Heart right ventricle (tissue), 16 donors: ENCODE measurements at regions of chr14 and their contacts with region 1.

Region 1: DNA sequence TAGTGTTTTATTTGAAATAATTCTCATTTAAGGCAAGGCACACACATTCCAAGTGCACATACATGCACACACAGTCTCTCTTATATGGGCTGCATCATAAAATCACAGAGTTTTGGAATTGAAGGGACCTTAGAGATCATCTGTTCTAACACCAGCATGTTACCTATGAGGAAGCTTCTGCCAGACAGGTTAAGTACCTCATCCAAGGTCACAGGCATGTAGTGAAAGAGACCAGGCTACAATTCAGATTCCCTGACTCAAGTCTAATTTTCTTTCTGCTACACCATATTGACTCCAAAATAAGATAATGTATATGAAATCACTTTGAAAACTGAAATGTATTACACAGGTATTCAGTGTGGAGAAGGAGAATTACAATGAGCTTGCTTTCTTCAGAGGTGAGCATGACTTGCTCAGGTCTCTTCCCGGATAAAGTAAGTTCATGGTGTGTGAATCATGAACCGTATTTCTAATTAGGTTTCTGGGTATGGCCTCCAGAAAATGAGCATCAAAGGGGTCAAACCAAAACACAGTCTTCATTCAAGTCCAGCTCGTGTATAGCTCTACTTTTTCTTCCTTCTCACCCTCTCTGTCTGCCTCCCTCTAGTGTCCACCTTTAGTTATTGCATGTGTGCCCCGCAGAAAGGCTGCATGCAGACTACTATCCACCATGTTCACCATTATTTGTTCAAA is 411.9 kb downstream of the FUT8 start:
- DNase-seq: peak in 1 of 2 donors; percentile 48
- ATAC-seq: peak in 7 of 8 donors; percentile 55 to 84 (median 71)
- H3K4me3 ChIP-seq: no peak overlapping the region
- H3K27ac ChIP-seq: no peak overlapping the region
- H3K4me1 ChIP-seq: no peaks in the 10 kb centered on the region
- H3K27me3 ChIP-seq: peaks cover 0 to 51% (median 41%) of the 10 kb centered on the region in 7 donors
- CTCF ChIP-seq: peak; percentile 81 to 95 (median 91)

Region 2: DNA sequence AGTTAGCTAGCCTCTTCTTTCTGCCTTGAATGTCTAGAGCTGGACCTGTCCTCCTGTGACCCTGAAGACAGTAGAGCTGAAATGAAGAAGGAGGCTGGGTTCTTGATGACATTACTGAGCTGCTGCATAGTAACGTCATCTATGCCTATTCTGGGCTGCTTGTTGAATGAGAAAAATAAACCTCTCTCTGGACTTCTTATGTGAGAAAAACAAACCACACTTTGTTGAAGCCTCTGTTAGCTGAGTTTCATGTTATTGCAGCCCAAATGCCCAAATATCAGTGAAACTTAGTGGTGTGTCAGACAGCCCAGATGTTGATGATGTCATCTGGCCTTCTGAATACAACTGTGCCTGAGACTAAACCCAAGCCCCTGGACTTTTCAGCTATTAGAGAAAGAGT is 655.1 kb before region 1 on chr14:
- intact Hi-C with region 1: loop called in 8 of 10 experiments (anchors 2 to 10 kb)
- DNase-seq: peak in 1 of 2 donors; percentile 10
- ATAC-seq: peak in 7 of 8 donors; percentile 54 to 85 (median 71)
- H3K4me3 ChIP-seq: no peak overlapping the region
- H3K27ac ChIP-seq: peak overlapping the region in 6 of 10 donors; percentile 17 to 58 (median 47)
- H3K4me1 ChIP-seq: peaks cover 0 to 25% (median 7%) of the 10 kb centered on the region in 9 donors
- H3K27me3 ChIP-seq: peaks cover 0 to 24% (median 12%) of the 10 kb centered on the region in 7 donors
- CTCF ChIP-seq: no peak

Region 3: DNA sequence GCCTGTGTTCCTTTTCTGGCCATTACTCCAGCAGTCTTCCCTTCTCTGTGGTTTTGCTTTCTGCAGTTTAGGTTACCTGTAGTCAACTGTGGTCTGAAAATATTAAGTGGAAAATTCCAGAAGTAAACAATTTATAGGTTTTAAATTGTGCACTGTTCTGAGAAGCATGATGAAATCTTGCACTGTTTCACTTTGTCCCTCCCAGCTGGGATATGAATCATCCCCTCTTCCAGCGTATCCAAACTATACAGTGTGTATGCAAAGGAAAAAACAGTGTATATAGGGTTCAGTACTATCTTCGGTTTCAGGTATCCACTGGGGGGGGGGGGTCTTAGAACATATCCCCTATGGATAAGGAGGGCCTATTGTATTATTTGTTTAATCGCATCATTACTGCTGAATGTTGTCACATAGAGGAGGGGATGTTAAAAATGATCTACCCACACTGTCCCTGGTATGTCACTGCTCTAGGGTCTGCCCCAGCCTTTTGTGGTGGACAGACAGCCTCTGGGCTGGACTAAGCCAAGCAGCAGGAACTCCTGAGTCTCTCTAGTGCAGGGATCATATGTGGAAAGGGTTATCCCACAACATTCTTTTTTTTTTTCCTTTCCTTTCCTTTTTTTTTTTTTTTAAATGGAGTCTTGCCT is 613.0 kb before region 1 on chr14:
- intact Hi-C with region 1: loop called in 1 of 10 experiments (anchors 10 kb)
- DNase-seq: no peak
- ATAC-seq: no peak
- H3K4me3 ChIP-seq: no peak overlapping the region
- H3K27ac ChIP-seq: peak overlapping the region in 1 of 10 donors; percentile 59
- H3K4me1 ChIP-seq: peaks cover 0 to 64% (median 0%) of the 10 kb centered on the region in 9 donors
- H3K27me3 ChIP-seq: no peaks in the 10 kb centered on the region
- CTCF ChIP-seq: no peak

Region 4: GRCh38 chr14:65222440-65222858 is 602.0 kb before region 1 on chr14:
- intact Hi-C with region 1: loop called in 3 of 10 experiments (anchors 2 to 10 kb)
- DNase-seq: peak; percentile 23 to 55
- ATAC-seq: peak in 7 of 8 donors; percentile 29 to 81 (median 79)
- H3K4me3 ChIP-seq: no peak overlapping the region
- H3K27ac ChIP-seq: peak overlapping the region in 1 of 10 donors; percentile 35
- H3K4me1 ChIP-seq: peaks cover 0 to 31% (median 13%) of the 10 kb centered on the region in 9 donors
- H3K27me3 ChIP-seq: no peaks in the 10 kb centered on the region
- CTCF ChIP-seq: peak; percentile 61 to 88 (median 76)

Region 5: GRCh38 chr14:65745396-65746190 is 78.8 kb before region 1 on chr14:
- intact Hi-C with region 1: no loop called
- DNase-seq: no peak
- ATAC-seq: no peak
- H3K4me3 ChIP-seq: no peak overlapping the region
- H3K27ac ChIP-seq: no peak overlapping the region
- H3K4me1 ChIP-seq: no peaks in the 10 kb centered on the region
- H3K27me3 ChIP-seq: no peaks in the 10 kb centered on the region
- CTCF ChIP-seq: no peak

Region 6: GRCh38 chr14:65958664-65959562 is 134.5 kb after region 1 on chr14:
- intact Hi-C with region 1: loop called in 1 of 10 experiments (anchors 10 kb)
- DNase-seq: no peak
- ATAC-seq: peak in 7 of 8 donors; percentile 19 to 69 (median 33)
- H3K4me3 ChIP-seq: no peak overlapping the region
- H3K27ac ChIP-seq: no peak overlapping the region
- H3K4me1 ChIP-seq: peaks cover 0 to 6% (median 0%) of the 10 kb centered on the region in 9 donors
- H3K27me3 ChIP-seq: peaks cover 0 to 14% (median 0%) of the 10 kb centered on the region in 7 donors
- CTCF ChIP-seq: peak; percentile 19 to 68 (median 56)

Region 7: DNA sequence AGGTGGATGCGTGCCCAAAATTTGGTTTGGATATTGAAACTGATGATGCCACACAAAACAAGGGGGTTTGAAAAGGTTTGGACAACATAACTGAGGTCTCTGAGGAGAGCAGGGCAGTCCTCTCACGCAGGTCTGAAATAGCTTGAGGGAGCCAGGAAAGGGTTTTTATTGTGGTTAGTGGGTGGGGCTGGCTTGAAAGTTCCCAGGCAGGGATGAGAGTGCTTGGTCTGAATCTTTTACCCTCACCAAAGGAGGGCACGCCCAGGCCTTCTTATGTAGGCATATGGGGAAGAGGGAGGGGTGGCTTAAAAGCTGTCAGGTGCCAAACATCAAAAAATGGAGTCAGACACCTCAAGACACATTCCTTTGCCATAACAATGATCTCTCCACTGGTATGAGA is 168.7 kb after region 1 on chr14:
- intact Hi-C with region 1: no loop called
- DNase-seq: no peak
- ATAC-seq: no peak
- H3K4me3 ChIP-seq: no peak overlapping the region
- H3K27ac ChIP-seq: no peak overlapping the region
- H3K4me1 ChIP-seq: no peaks in the 10 kb centered on the region
- H3K27me3 ChIP-seq: no peaks in the 10 kb centered on the region
- CTCF ChIP-seq: no peak